CD4-positive, alpha-beta T cell (primary cell): ENCODE measurements at regions of chr3 and their contacts with region 1.

Region 1: DNA sequence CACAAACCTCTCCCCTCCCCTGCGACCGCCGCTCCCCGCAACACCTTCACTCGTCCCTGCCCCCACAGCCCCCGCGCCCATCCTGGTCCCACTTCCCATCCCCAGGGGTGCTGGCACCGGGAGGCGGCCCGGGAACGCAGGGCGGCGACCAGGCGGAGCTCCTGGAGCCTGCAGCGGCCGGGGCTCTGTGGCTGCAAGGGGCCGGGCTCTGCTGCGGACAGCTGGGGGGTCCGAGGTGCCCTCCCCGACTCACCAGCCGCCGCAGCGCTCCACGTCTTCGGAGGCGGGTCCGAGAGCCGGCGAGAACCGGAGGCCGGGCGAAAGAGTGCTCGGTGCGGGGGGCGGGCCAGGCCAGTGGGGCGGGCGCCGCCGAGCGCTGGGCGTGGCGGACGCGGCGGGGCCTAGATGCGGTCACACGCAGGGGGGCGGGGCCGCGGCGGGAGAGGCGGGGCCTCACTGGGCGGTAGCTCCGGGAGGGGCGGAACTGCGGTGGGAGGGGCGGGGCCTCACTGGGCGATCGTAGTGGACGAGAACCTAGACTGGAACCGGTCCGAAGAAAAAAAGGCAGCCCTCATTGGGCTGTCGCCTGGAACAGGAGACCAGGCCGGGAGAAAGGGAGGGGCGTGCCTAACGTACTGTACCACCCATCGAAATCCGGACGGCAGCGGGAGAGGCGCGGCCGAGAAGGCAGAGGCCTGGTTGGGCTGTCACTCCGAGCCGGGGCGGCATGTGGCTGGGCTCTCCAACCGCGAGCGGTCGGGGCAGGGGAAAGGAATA is at the start of gene ANO10:
- DNase-seq: peak; percentile 87 to 98 (median 93)
- ATAC-seq: peak; percentile 92
- H3K4me3 ChIP-seq: peak within 1 kb of the TSS; percentile 68
- H3K4me3 Mint-ChIP-seq: peak within 1 kb of the TSS; percentile 90
- H3K27ac ChIP-seq: peak within 1 kb of the TSS in 1 of 2 donors; percentile 23
- H3K27ac Mint-ChIP-seq: peak within 1 kb of the TSS; percentile 82
- H3K4me1 ChIP-seq: peaks cover 16% of the 10 kb centered on the region
- H3K4me1 Mint-ChIP-seq: peaks cover 21% of the 10 kb centered on the region
- H3K27me3 ChIP-seq: no peaks in the 10 kb centered on the region
- H3K27me3 Mint-ChIP-seq: no peaks in the 10 kb centered on the region
- CTCF ChIP-seq: no peak
- total RNA-seq, gene ANO10: 6.9 to 8.0 TPM

Region 2: DNA sequence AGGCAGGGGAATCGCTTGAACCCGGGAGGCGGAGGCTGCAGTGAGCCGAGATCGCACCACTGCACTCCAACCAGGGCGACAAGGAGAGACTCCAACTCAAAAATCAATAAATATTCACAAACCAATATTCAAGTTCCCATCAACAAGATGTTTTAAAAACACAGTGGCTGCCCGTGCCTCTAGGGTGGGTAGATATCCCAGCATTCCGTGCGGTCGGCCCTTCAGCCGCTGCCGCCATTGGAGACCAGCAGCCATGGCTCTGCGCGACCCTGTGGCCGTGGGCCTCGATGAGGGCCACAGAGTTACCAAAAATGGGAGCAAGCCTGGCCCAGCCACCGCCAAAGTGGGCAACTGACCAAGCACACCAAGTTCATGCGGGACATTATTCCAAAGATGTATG is 1666.7 kb before region 1 on chr3:
- CTCF ChIA-PET with region 1: no interaction called
- POLR2A ChIA-PET with region 1: no interaction called
- intact Hi-C with region 1: loop called in 1 of 2 experiments (anchors 5 kb)
- DNase-seq: no peak
- ATAC-seq: no peak
- H3K4me3 ChIP-seq: no peak overlapping the region
- H3K4me3 Mint-ChIP-seq: no peak overlapping the region
- H3K27ac ChIP-seq: no peak overlapping the region
- H3K27ac Mint-ChIP-seq: no peak overlapping the region
- H3K4me1 ChIP-seq: peaks cover under 1% of the 10 kb centered on the region
- H3K4me1 Mint-ChIP-seq: peaks cover 4% of the 10 kb centered on the region
- H3K27me3 ChIP-seq: no peaks in the 10 kb centered on the region
- H3K27me3 Mint-ChIP-seq: no peaks in the 10 kb centered on the region
- CTCF ChIP-seq: no peak

Region 3: GRCh38 chr3:42590989-42591756 is 1030.7 kb before region 1 on chr3:
- CTCF ChIA-PET with region 1: no interaction called
- POLR2A ChIA-PET with region 1: no interaction called
- intact Hi-C with region 1: loop called in 1 of 2 experiments (anchors 10 kb)
- DNase-seq: peak in 1 of 14 experiments; percentile 11
- ATAC-seq: peak; percentile 30
- H3K4me3 ChIP-seq: peak overlapping the region; percentile 80
- H3K4me3 Mint-ChIP-seq: peak overlapping the region; percentile 99
- H3K27ac ChIP-seq: peak overlapping the region; percentile 48 to 83
- H3K27ac Mint-ChIP-seq: peak overlapping the region; percentile 89
- H3K4me1 ChIP-seq: peaks cover 23% of the 10 kb centered on the region
- H3K4me1 Mint-ChIP-seq: peaks cover 33% of the 10 kb centered on the region
- H3K27me3 ChIP-seq: no peaks in the 10 kb centered on the region
- H3K27me3 Mint-ChIP-seq: no peaks in the 10 kb centered on the region
- CTCF ChIP-seq: no peak

Region 4: DNA sequence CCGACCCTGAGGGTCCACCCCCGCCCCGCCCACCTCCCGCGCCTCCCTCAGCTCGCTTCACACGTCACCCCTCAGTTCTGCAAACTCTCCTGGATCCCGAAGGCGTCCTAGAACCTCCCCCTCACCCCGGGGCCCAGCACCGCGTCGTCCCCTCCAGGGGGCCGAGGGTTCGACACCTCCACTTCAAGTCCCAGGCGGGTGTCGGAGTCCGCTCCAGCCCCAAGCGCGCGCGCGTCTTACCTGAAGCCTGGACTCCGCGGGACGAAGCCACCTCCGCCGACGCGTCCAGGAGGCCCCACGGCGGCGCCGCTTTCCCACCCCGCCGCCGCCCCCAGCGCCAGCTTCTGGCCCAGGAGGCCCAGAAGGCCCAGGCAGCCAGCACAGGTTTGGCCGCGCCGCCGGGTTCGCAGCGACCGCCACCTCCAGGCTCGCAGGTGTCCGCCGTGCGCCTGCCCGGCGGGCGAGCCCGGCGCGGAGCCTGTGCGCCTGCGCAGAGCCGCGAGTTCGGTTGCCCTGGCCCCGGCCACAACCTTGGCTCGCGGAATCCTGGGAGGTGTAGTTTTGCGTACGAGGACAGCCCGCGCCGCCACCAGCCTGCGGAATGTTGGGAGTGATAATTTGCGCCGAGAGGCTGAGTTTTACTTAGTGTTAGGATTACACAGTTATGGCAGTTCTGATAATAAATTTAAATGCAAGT is 516.1 kb before region 1 on chr3 and contains the start of gene POMGNT2:
- CTCF ChIA-PET with region 1: no interaction called
- POLR2A ChIA-PET with region 1: no interaction called
- intact Hi-C with region 1: loop called in 1 of 2 experiments (anchors 10 kb)
- DNase-seq: peak; percentile 77 to 95 (median 87)
- ATAC-seq: peak; percentile 94
- H3K4me3 ChIP-seq: peak within 1 kb of the TSS; percentile 68
- H3K4me3 Mint-ChIP-seq: peak within 1 kb of the TSS; percentile 89
- H3K27ac ChIP-seq: no peak within 1 kb of the TSS
- H3K27ac Mint-ChIP-seq: peak within 1 kb of the TSS; percentile 56
- H3K4me1 ChIP-seq: peaks cover 17% of the 10 kb centered on the region
- H3K4me1 Mint-ChIP-seq: peaks cover 30% of the 10 kb centered on the region
- H3K27me3 ChIP-seq: no peaks in the 10 kb centered on the region
- H3K27me3 Mint-ChIP-seq: no peaks in the 10 kb centered on the region
- CTCF ChIP-seq: no peak
- total RNA-seq, gene POMGNT2: 6.8 to 8.4 TPM

Region 5: DNA sequence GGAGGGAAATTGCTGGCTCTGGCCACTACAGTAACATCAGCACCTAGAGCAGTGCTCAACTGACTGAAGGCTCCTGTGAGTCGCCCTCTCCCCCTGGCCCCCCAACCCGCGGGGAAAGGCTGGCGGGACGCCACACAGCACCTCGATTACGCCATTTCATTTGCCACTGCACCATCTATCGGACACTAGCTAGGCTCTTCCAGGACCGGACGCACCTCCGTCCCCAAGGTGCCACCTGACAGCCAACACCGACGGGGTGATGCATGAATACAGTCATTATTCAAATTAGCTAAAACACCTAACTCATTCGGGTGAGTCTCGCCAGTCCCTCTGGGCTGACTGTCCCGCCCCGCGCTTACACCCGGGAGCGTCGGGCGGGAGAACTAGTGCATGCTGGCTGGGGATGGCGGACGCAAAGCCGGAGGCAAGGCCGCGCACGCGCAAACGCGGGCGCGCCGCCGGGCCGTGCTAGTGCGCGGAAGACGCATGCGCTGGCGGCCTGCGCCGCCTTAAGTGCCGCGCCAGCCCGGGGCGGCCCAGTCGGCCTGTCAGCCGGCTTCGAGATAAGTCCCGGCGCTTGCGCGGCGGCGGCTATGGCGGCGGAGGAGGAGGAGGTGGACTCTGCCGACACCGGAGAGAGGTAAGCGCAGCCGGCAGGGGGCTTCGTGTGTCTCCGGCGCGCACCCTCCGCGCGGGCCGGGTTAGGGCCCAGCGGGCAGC is 68.7 kb after region 1 on chr3 and contains the start of gene ABHD5:
- CTCF ChIA-PET with region 1: no interaction called
- POLR2A ChIA-PET with region 1: interaction called, 12 read pairs
- intact Hi-C with region 1: loop called (anchors 2 to 5 kb)
- DNase-seq: peak; percentile 92 to 99 (median 97)
- ATAC-seq: peak; percentile 92
- H3K4me3 ChIP-seq: peak within 1 kb of the TSS; percentile 64
- H3K4me3 Mint-ChIP-seq: peak within 1 kb of the TSS; percentile 96
- H3K27ac ChIP-seq: peak within 1 kb of the TSS; percentile 59 to 67
- H3K27ac Mint-ChIP-seq: peak within 1 kb of the TSS; percentile 93
- H3K4me1 ChIP-seq: peaks cover 18% of the 10 kb centered on the region
- H3K4me1 Mint-ChIP-seq: peaks cover 33% of the 10 kb centered on the region
- H3K27me3 ChIP-seq: no peaks in the 10 kb centered on the region
- H3K27me3 Mint-ChIP-seq: no peaks in the 10 kb centered on the region
- CTCF ChIP-seq: peak; percentile 48
- total RNA-seq, gene ABHD5: 6.4 to 9.3 TPM

Region 6: GRCh38 chr3:43759297-43759782 is 137.5 kb after region 1 on chr3:
- CTCF ChIA-PET with region 1: no interaction called
- POLR2A ChIA-PET with region 1: interaction called, 4 read pairs
- intact Hi-C with region 1: loop called in 1 of 2 experiments (anchors 10 kb)
- DNase-seq: peak in 3 of 14 experiments; percentile 24 to 30 (median 24)
- ATAC-seq: no peak
- H3K4me3 ChIP-seq: no peak overlapping the region
- H3K4me3 Mint-ChIP-seq: no peak overlapping the region
- H3K27ac ChIP-seq: no peak overlapping the region
- H3K27ac Mint-ChIP-seq: peak overlapping the region; percentile 19
- H3K4me1 ChIP-seq: peaks cover 40% of the 10 kb centered on the region
- H3K4me1 Mint-ChIP-seq: peaks cover 52% of the 10 kb centered on the region
- H3K27me3 ChIP-seq: no peaks in the 10 kb centered on the region
- H3K27me3 Mint-ChIP-seq: no peaks in the 10 kb centered on the region
- CTCF ChIP-seq: peak; percentile 38

Region 7: GRCh38 chr3:44411031-44411645 is 789.3 kb after region 1 on chr3:
- CTCF ChIA-PET with region 1: no interaction called
- POLR2A ChIA-PET with region 1: no interaction called
- intact Hi-C with region 1: no loop called
- DNase-seq: no peak
- ATAC-seq: no peak
- H3K4me3 ChIP-seq: no peak overlapping the region
- H3K4me3 Mint-ChIP-seq: no peak overlapping the region
- H3K27ac ChIP-seq: no peak overlapping the region
- H3K27ac Mint-ChIP-seq: no peak overlapping the region
- H3K4me1 ChIP-seq: no peaks in the 10 kb centered on the region
- H3K4me1 Mint-ChIP-seq: no peaks in the 10 kb centered on the region
- H3K27me3 ChIP-seq: no peaks in the 10 kb centered on the region
- H3K27me3 Mint-ChIP-seq: no peaks in the 10 kb centered on the region
- CTCF ChIP-seq: no peak